Vagina (tissue), 2 donors: ENCODE measurements at regions of chr14 and their contacts with region 1.

Region 1: GRCh38 chr14:67426983-67427606 is 15.1 kb upstream of the PLEK2 start:
- DNase-seq: no peak
- H3K4me3 ChIP-seq: no peak overlapping the region
- H3K27ac ChIP-seq: no peak overlapping the region
- H3K4me1 ChIP-seq: no peaks in the 10 kb centered on the region
- H3K27me3 ChIP-seq: no peaks in the 10 kb centered on the region
- CTCF ChIP-seq: peak in 2 of 3 experiments; percentile 53 to 71
- POLR2A ChIP-seq: no peak

Region 2: GRCh38 chr14:66459603-66460002 is 967.5 kb before region 1 on chr14:
- intact Hi-C with region 1: no loop called
- DNase-seq: no peak
- H3K4me3 ChIP-seq: no peak overlapping the region
- H3K27ac ChIP-seq: no peak overlapping the region
- H3K4me1 ChIP-seq: no peaks in the 10 kb centered on the region
- H3K27me3 ChIP-seq: no peaks in the 10 kb centered on the region
- CTCF ChIP-seq: no peak
- POLR2A ChIP-seq: no peak

Region 3: GRCh38 chr14:67352055-67352454 is 75.0 kb before region 1 on chr14:
- intact Hi-C with region 1: no loop called
- DNase-seq: no peak
- H3K4me3 ChIP-seq: no peak overlapping the region
- H3K27ac ChIP-seq: no peak overlapping the region
- H3K4me1 ChIP-seq: peaks cover 22% of the 10 kb centered on the region
- H3K27me3 ChIP-seq: no peaks in the 10 kb centered on the region
- CTCF ChIP-seq: no peak
- POLR2A ChIP-seq: no peak

Region 4: GRCh38 chr14:67571272-67571850 is 144.3 kb after region 1 on chr14:
- intact Hi-C with region 1: loop called (anchors 10 kb)
- DNase-seq: no peak
- H3K4me3 ChIP-seq: no peak overlapping the region
- H3K27ac ChIP-seq: no peak overlapping the region
- H3K4me1 ChIP-seq: no peaks in the 10 kb centered on the region
- H3K27me3 ChIP-seq: no peaks in the 10 kb centered on the region
- CTCF ChIP-seq: peak; percentile 54 to 88 (median 69)
- POLR2A ChIP-seq: no peak